ENCODE measurements at regions of chr12 and their contacts with region 1.

Region 1: GRCh38 chr12:50924439-50925341 is 27.7 kb upstream of the HIGD1C start:
- DNase-seq: peak; percentile 49
- ATAC-seq: peak; percentile 88
- H3K4me3 Mint-ChIP-seq: peak overlapping the region; percentile 97
- H3K27ac Mint-ChIP-seq: peak overlapping the region; percentile 98
- H3K4me1 Mint-ChIP-seq: peaks cover 75% of the 10 kb centered on the region
- H3K27me3 Mint-ChIP-seq: no peaks in the 10 kb centered on the region
- CTCF ChIP-seq: no peak

Region 2: GRCh38 chr12:50597200-50598195 is 327.2 kb before region 1 on chr12:
- CTCF ChIA-PET with region 1: no interaction called
- POLR2A ChIA-PET with region 1: interaction called, 12 read pairs
- intact Hi-C with region 1: no loop called
- DNase-seq: no peak
- ATAC-seq: peak; percentile 96
- H3K4me3 Mint-ChIP-seq: peak overlapping the region; percentile 60
- H3K27ac Mint-ChIP-seq: peak overlapping the region; percentile 85
- H3K4me1 Mint-ChIP-seq: peaks cover 49% of the 10 kb centered on the region
- H3K27me3 Mint-ChIP-seq: no peaks in the 10 kb centered on the region
- CTCF ChIP-seq: no peak

Region 3: GRCh38 chr12:50894241-50894640 is 30.4 kb before region 1 on chr12:
- CTCF ChIA-PET with region 1: interaction called, 4 read pairs
- POLR2A ChIA-PET with region 1: interaction called, 5 read pairs
- intact Hi-C with region 1: loop called (anchors 2 kb)
- DNase-seq: no peak
- ATAC-seq: no peak
- H3K4me3 Mint-ChIP-seq: no peak overlapping the region
- H3K27ac Mint-ChIP-seq: no peak overlapping the region
- H3K4me1 Mint-ChIP-seq: peaks cover 8% of the 10 kb centered on the region
- H3K27me3 Mint-ChIP-seq: no peaks in the 10 kb centered on the region
- CTCF ChIP-seq: no peak

Region 4: DNA sequence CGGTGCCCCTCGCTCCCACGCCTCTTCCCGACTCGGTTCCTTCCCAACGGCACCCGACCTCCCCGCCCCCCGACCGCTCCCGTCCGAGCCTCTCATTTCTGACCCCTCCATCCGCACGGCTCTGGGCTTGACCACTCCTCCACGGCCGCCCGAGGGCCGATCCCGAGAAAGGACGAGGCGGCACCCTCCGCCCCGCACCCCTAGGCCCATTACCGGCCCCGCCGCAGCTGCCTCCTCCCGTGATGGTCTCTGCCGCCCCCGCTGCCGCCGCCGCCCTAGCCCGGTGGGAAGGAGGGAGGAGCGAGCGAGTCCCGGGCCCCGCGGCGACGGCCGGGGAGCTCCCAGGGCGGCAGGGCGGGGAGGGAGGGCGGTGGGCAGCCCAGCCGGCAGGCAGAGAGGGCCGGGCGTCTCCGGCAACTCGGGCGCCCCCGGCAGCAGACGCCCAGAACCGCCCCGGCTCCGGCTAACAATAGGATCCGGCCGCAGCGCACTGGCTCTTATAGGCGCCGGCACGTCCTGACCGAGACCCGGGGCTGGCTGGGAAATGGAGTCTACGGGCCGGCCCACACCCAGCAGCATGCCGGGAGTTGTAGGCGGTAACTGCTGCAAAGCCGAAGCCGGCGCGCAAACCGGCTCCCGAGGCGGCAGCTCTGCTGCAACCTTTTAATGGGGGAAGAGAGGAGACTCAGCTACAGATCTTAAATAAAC is 158.6 kb after region 1 on chr12 and contains the start of gene CSRNP2:
- CTCF ChIA-PET with region 1: no interaction called
- POLR2A ChIA-PET with region 1: interaction called, 3 read pairs
- intact Hi-C with region 1: loop called (anchors 2 kb)
- DNase-seq: peak; percentile 92
- ATAC-seq: peak; percentile 99
- H3K4me3 Mint-ChIP-seq: peak within 1 kb of the TSS; percentile 96
- H3K27ac Mint-ChIP-seq: peak within 1 kb of the TSS; percentile 71
- H3K4me1 Mint-ChIP-seq: peaks cover 20% of the 10 kb centered on the region
- H3K27me3 Mint-ChIP-seq: no peaks in the 10 kb centered on the region
- CTCF ChIP-seq: no peak
- total RNA-seq, gene CSRNP2: 16.9 and 17.7 TPM in 2 replicates

Region 5: GRCh38 chr12:51326762-51327439 is 402.2 kb after region 1 on chr12:
- CTCF ChIA-PET with region 1: no interaction called
- POLR2A ChIA-PET with region 1: interaction called, 4 read pairs
- intact Hi-C with region 1: loop called (anchors 10 kb)
- DNase-seq: no peak
- ATAC-seq: peak; percentile 41
- H3K4me3 Mint-ChIP-seq: peak overlapping the region; percentile 62
- H3K27ac Mint-ChIP-seq: peak overlapping the region; percentile 72
- H3K4me1 Mint-ChIP-seq: peaks cover 81% of the 10 kb centered on the region
- H3K27me3 Mint-ChIP-seq: no peaks in the 10 kb centered on the region
- CTCF ChIP-seq: no peak

Measured in activated B cell treated with CpG ODN at 0.5 μM for 24 hours (primary cell).